Activated CD8-positive, alpha-beta T cell treated with anti-CD3 and anti-CD28 coated beads for 36 hours (primary cell): ENCODE measurements at regions of chr17 and their contacts with region 1.

Region 1: GRCh38 chr17:46061435-46061834 is 62.4 kb downstream of the STH start:
- DNase-seq: no peak
- ATAC-seq: no peak
- H3K4me3 Mint-ChIP-seq: no peak overlapping the region
- H3K27ac Mint-ChIP-seq: no peak overlapping the region
- H3K4me1 Mint-ChIP-seq: peaks cover 38% of the 10 kb centered on the region
- H3K27me3 Mint-ChIP-seq: no peaks in the 10 kb centered on the region
- CTCF ChIP-seq: peak; percentile 54

Region 2: GRCh38 chr17:45942284-45942683 is 119.2 kb before region 1 on chr17:
- CTCF ChIA-PET with region 1: no interaction called
- POLR2A ChIA-PET with region 1: no interaction called
- intact Hi-C with region 1: no loop called
- DNase-seq: no peak
- ATAC-seq: no peak
- H3K4me3 Mint-ChIP-seq: no peak overlapping the region
- H3K27ac Mint-ChIP-seq: no peak overlapping the region
- H3K4me1 Mint-ChIP-seq: peaks cover 3% of the 10 kb centered on the region
- H3K27me3 Mint-ChIP-seq: peaks cover 19% of the 10 kb centered on the region
- CTCF ChIP-seq: no peak

Region 3: DNA sequence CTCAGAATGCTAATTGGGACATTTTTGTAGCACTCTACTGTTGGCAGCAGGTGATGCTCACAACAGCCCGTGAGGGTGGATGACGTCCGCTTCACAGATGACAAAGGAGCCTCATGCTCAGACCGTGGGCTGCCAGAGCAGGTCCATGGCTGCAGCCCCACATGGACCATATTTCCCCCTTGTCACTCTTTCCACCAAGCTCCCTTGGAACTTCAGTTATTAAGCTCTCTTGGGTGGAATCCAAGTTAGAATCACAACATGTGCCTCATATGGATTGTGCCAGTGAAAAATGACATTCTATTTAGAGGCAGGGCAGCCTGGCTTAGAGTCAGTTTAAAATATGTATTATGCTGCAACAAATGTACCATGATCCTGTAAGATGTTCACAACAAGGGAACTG is 95.6 kb before region 1 on chr17:
- CTCF ChIA-PET with region 1: no interaction called
- POLR2A ChIA-PET with region 1: no interaction called
- intact Hi-C with region 1: no loop called
- DNase-seq: no peak
- ATAC-seq: no peak
- H3K4me3 Mint-ChIP-seq: no peak overlapping the region
- H3K27ac Mint-ChIP-seq: no peak overlapping the region
- H3K4me1 Mint-ChIP-seq: no peaks in the 10 kb centered on the region
- H3K27me3 Mint-ChIP-seq: peaks cover 13% of the 10 kb centered on the region
- CTCF ChIP-seq: no peak

Region 4: DNA sequence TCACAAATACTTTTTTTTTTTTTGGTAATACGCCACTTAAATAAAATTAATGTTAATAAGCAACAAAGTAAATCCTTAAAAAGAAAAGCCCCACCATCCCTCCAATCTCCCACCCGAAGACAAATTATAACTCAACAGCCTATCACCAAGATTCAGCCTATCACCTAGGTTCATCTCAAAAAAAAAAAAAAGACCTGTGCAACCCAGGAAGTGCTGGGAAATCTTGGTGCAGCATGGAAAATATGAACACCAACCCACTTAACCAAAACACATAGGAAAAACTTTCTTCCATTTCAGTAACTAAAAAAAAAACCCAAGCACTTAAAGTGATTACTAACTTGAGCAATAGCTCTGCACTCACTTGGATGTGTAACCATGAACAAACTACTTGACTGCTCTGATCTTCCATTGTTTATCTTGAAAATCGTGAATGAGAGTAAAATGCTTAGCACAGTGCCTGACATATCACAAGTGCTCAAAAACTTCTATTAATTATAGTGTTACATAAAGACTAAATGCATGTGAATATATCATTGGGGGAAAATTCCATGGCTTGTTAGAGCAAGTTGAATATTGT is 28.0 kb after region 1 on chr17:
- CTCF ChIA-PET with region 1: interaction called, 14 read pairs
- POLR2A ChIA-PET with region 1: no interaction called
- intact Hi-C with region 1: no loop called
- DNase-seq: no peak
- ATAC-seq: no peak
- H3K4me3 Mint-ChIP-seq: no peak overlapping the region
- H3K27ac Mint-ChIP-seq: peak overlapping the region; percentile 57
- H3K4me1 Mint-ChIP-seq: peaks cover 60% of the 10 kb centered on the region
- H3K27me3 Mint-ChIP-seq: no peaks in the 10 kb centered on the region
- CTCF ChIP-seq: no peak

Region 5: GRCh38 chr17:46139432-46140210 is 78.2 kb after region 1 on chr17:
- CTCF ChIA-PET with region 1: no interaction called
- POLR2A ChIA-PET with region 1: no interaction called
- intact Hi-C with region 1: loop called (anchors 10 kb)
- DNase-seq: no peak
- ATAC-seq: no peak
- H3K4me3 Mint-ChIP-seq: no peak overlapping the region
- H3K27ac Mint-ChIP-seq: no peak overlapping the region
- H3K4me1 Mint-ChIP-seq: peaks cover 87% of the 10 kb centered on the region
- H3K27me3 Mint-ChIP-seq: no peaks in the 10 kb centered on the region
- CTCF ChIP-seq: no peak